ENCODE measurements at regions of chr2 and their contacts with region 1.

Region 1: GRCh38 chr2:15636972-15637785 is 45.5 kb downstream of the DDX1 start:
- DNase-seq: peak; percentile 44 to 71
- ATAC-seq: peak; percentile 86

Region 2: GRCh38 chr2:15577071-15577735 is 60.0 kb before region 1 on chr2:
- intact Hi-C with region 1: no loop called
- DNase-seq: peak; percentile 82 to 96
- ATAC-seq: peak; percentile 93

Region 3: GRCh38 chr2:16507655-16508489 is 870.7 kb after region 1 on chr2:
- intact Hi-C with region 1: loop called in 1 of 2 experiments (anchors 5 kb)
- DNase-seq: peak; percentile 27 to 55
- ATAC-seq: peak; percentile 98

Region 4: GRCh38 chr2:16608661-16609643 is 971.8 kb after region 1 on chr2:
- intact Hi-C with region 1: loop called in 1 of 2 experiments (anchors 10 kb)
- DNase-seq: peak; percentile 66 to 86
- ATAC-seq: peak; percentile 92